ENCODE measurements at regions of chr5 and their contacts with region 1.

Region 1: DNA sequence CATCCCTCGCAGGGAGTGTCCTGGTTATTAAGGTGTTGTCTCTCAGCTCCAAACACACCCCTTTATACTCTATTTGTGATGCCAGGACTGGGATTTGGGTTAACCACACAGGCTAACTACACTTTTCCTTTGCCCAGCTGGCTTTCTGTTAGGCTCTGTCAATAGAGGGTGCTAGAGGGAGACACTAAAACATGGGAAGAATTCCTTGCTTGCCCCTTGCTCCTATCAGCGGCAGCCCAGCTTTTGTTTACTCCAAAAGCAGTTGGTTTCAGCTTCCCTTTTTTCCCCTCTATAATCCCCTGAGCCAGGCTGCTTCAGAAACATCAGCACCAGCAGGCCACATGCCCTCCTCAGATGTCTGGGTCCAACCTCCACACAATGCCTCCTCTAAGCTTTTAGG is 297.1 kb downstream of the KCTD16 start:
- DNase-seq: peak; percentile 43 to 60
- H3K4me3 ChIP-seq: no peak overlapping the region
- H3K4me3 Mint-ChIP-seq: no peak overlapping the region
- H3K27ac Mint-ChIP-seq: no peak overlapping the region
- H3K4me1 ChIP-seq: no peaks in the 10 kb centered on the region
- H3K4me1 Mint-ChIP-seq: peaks cover 6% of the 10 kb centered on the region
- H3K27me3 ChIP-seq: no peaks in the 10 kb centered on the region
- H3K27me3 Mint-ChIP-seq: no peaks in the 10 kb centered on the region
- CTCF ChIP-seq: peak; percentile 34 to 73

Region 2: GRCh38 chr5:145090115-145090514 is 622.3 kb after region 1 on chr5:
- CTCF ChIA-PET with region 1: no interaction called
- POLR2A ChIA-PET with region 1: no interaction called
- intact Hi-C with region 1: no loop called
- DNase-seq: no peak
- H3K4me3 ChIP-seq: no peak overlapping the region
- H3K4me3 Mint-ChIP-seq: no peak overlapping the region
- H3K27ac Mint-ChIP-seq: no peak overlapping the region
- H3K4me1 ChIP-seq: no peaks in the 10 kb centered on the region
- H3K4me1 Mint-ChIP-seq: no peaks in the 10 kb centered on the region
- H3K27me3 ChIP-seq: no peaks in the 10 kb centered on the region
- H3K27me3 Mint-ChIP-seq: no peaks in the 10 kb centered on the region
- CTCF ChIP-seq: no peak

Region 3: GRCh38 chr5:145237843-145238242 is 770.1 kb after region 1 on chr5:
- CTCF ChIA-PET with region 1: no interaction called
- POLR2A ChIA-PET with region 1: no interaction called
- intact Hi-C with region 1: loop called (anchors 10 kb)
- DNase-seq: peak; percentile 57 to 60
- H3K4me3 ChIP-seq: no peak overlapping the region
- H3K4me3 Mint-ChIP-seq: no peak overlapping the region
- H3K27ac Mint-ChIP-seq: no peak overlapping the region
- H3K4me1 ChIP-seq: no peaks in the 10 kb centered on the region
- H3K4me1 Mint-ChIP-seq: no peaks in the 10 kb centered on the region
- H3K27me3 ChIP-seq: no peaks in the 10 kb centered on the region
- H3K27me3 Mint-ChIP-seq: peaks cover 4% of the 10 kb centered on the region
- CTCF ChIP-seq: peak; percentile 62 to 71

Measured in Caco-2 (cell line).